ENCODE measurements at regions of chrX and their contacts with region 1.

Region 1: DNA sequence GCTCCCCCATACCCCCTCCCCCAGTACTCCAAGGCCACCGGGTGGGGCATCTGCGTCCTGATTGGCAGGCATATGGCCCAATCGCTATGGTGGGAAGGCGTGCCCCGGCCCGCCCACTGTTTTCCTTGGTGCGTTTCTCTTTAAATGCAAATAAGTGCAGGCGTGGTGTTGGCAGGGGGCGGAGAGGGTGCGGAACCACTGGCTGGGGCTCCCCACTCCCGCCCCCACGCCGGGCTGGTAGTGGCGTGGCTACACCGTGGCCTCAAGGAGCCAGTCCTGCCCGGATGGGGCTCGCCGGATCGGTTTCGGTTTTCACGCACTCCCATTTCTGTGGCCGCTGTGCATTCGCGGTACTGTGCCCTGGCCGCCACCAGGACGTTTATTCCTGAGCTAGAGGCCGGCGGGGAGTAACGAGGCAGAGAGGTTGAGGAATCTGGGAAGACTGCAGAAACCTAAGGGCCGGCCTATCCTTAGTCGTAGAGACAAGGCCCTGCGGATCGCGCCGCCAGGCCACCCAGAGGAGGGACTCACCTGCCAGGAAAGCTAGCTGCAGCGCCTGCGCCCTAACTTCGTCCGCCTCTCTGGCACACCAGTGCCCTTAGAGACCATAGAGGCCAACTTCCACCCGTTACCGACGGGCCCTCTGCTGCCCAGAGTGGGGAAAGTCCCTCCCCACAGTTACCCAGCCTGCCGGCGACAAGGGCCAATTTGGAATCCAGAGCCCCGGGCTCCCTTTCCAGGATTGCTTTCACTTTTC is 405 bp upstream of the AMER1 start:
- DNase-seq: peak; percentile 90
- H3K4me3 Mint-ChIP-seq: peak overlapping the region; percentile 73
- H3K27ac Mint-ChIP-seq: peak overlapping the region; percentile 84
- H3K4me1 Mint-ChIP-seq: no peaks in the 10 kb centered on the region
- H3K27me3 Mint-ChIP-seq: no peaks in the 10 kb centered on the region
- CTCF ChIP-seq: no peak

Region 2: GRCh38 chrX:64093761-64094160 is 112.2 kb before region 1 on chrX:
- CTCF ChIA-PET with region 1: interaction called, 6 read pairs
- POLR2A ChIA-PET with region 1: no interaction called
- intact Hi-C with region 1: loop called (anchors 1 kb)
- DNase-seq: peak; percentile 4
- H3K4me3 Mint-ChIP-seq: no peak overlapping the region
- H3K27ac Mint-ChIP-seq: no peak overlapping the region
- H3K4me1 Mint-ChIP-seq: no peaks in the 10 kb centered on the region
- H3K27me3 Mint-ChIP-seq: no peaks in the 10 kb centered on the region
- CTCF ChIP-seq: peak; percentile 20

Region 3: DNA sequence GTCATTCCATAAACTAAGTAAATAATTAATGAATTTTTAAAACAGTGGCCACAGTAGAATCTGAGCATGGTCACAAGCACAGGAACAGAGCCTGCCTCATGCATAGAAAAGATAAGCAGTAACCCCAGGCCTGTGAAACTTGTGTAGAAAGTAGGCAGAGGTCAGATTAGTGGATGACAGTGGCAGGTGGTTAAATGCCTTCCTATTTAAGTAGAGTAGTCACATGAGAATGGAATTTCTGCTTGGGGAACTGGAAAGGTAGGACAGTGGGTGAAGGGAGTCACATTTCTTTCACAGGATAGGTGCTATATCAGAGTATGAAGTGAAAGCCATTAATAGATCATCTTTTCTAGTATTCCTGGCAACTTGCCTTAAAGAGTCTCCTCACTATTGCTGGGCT is 59.3 kb after region 1 on chrX:
- CTCF ChIA-PET with region 1: no interaction called
- POLR2A ChIA-PET with region 1: no interaction called
- intact Hi-C with region 1: no loop called
- DNase-seq: no peak
- H3K4me3 Mint-ChIP-seq: no peak overlapping the region
- H3K27ac Mint-ChIP-seq: no peak overlapping the region
- H3K4me1 Mint-ChIP-seq: no peaks in the 10 kb centered on the region
- H3K27me3 Mint-ChIP-seq: no peaks in the 10 kb centered on the region
- CTCF ChIP-seq: no peak

Region 4: GRCh38 chrX:65534450-65535292 is 1328.8 kb after region 1 on chrX and contains the start of gene LAS1L:
- CTCF ChIA-PET with region 1: no interaction called
- POLR2A ChIA-PET with region 1: interaction called, 3 read pairs
- intact Hi-C with region 1: loop called (anchors 10 kb)
- DNase-seq: peak; percentile 93
- H3K4me3 Mint-ChIP-seq: peak within 1 kb of the TSS; percentile 79
- H3K27ac Mint-ChIP-seq: peak within 1 kb of the TSS; percentile 76
- H3K4me1 Mint-ChIP-seq: no peaks in the 10 kb centered on the region
- H3K27me3 Mint-ChIP-seq: no peaks in the 10 kb centered on the region
- CTCF ChIP-seq: no peak
- total RNA-seq, gene LAS1L: 42.2 and 49.8 TPM in 2 replicates

Measured in MCF 10A (cell line).